ENCODE measurements at regions of chr6 and their contacts with region 1.

Region 1: DNA sequence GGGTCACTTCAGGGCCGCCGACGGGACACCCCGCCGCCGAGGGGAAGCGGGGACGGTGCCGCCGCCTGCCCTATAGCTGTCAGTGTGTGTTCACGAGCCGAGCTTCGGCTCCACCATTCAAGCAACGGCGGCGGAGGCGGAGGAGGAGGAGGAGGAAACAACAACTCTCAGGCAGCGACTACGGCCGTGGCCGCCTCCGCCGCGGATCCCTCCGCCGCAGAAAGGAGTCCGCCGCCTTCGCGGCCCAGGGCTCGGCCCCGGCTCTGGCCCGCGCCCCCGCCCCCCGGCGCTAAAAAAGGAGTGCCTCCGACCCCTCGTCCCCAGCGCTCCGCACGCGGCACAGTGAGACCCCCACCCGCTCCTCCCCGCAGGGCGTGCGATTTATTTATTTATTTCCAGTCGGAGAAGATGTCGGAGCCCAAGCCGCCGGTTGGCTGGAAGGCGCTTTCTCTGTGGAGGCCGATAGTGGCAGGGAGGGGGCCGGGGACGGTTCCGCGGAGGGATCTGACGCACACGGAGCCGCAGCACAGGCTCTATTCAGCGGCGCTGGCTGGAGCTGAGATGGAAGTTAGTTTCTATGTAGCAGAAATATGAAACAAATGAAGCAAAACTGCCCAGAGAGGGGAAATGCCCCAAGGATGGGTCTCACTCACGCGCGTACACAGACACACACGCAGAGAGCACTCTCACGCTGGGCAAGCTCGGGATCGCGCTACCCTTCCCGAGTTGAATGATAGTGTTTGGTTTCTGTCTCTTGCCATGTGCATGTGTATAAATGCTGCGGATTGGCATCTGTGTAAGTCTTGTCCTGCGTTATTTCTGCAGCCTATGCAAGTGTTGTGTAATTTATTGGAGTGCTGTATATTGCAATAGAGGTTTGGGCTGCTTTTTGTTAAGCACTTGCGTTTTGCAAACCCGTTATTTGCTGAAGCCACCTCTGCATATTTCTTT is at the start of gene PHIP:
- DNase-seq: peak; percentile 85 to 97 (median 91)
- ATAC-seq: peak; percentile 82
- H3K4me3 ChIP-seq: peak within 1 kb of the TSS; percentile 80
- H3K4me3 Mint-ChIP-seq: peak within 1 kb of the TSS; percentile 95
- H3K27ac ChIP-seq: peak within 1 kb of the TSS; percentile 93 to 98
- H3K27ac Mint-ChIP-seq: peak within 1 kb of the TSS; percentile 98
- H3K4me1 ChIP-seq: peaks cover 2% of the 10 kb centered on the region
- H3K4me1 Mint-ChIP-seq: peaks cover 53% of the 10 kb centered on the region
- H3K27me3 ChIP-seq: peaks cover 0 to 5% of the 10 kb centered on the region in 2 experiments
- H3K27me3 Mint-ChIP-seq: peaks cover 8% of the 10 kb centered on the region
- CTCF ChIP-seq: no peak
- total RNA-seq, gene PHIP: 35.7 to 36.9 TPM

Region 2: DNA sequence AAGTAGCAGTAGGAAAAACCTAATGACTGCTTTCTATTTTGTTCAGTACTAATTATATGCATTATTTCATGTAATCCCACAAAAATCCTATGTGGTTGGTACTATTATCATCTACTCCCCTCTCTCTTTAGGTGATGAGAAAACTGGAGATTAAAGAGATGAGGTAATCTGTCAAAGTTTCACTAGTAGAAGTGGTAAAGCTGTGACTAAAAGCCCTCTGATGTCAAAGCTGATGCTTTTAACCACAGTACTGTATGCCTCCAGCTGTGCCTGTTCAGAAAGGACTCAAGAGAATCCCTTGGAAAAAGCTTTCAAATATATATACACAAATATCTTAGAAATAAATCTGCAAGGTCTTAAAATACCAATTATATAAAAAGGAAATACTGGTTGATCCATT is 38.3 kb before region 1 on chr6:
- CTCF ChIA-PET with region 1: no interaction called
- POLR2A ChIA-PET with region 1: interaction called, 15 read pairs
- intact Hi-C with region 1: loop called (anchors 5 kb)
- DNase-seq: peak in 1 of 14 experiments; percentile 4
- ATAC-seq: peak; percentile 26
- H3K4me3 ChIP-seq: no peak overlapping the region
- H3K4me3 Mint-ChIP-seq: no peak overlapping the region
- H3K27ac ChIP-seq: no peak overlapping the region
- H3K27ac Mint-ChIP-seq: no peak overlapping the region
- H3K4me1 ChIP-seq: no peaks in the 10 kb centered on the region
- H3K4me1 Mint-ChIP-seq: peaks cover 71% of the 10 kb centered on the region
- H3K27me3 ChIP-seq: no peaks in the 10 kb centered on the region
- H3K27me3 Mint-ChIP-seq: no peaks in the 10 kb centered on the region
- CTCF ChIP-seq: no peak

Region 3: GRCh38 chr6:79056226-79056625 is 22.1 kb before region 1 on chr6:
- CTCF ChIA-PET with region 1: interaction called, 3 read pairs
- POLR2A ChIA-PET with region 1: interaction called, 25 read pairs
- intact Hi-C with region 1: no loop called
- DNase-seq: no peak
- ATAC-seq: no peak
- H3K4me3 ChIP-seq: no peak overlapping the region
- H3K4me3 Mint-ChIP-seq: no peak overlapping the region
- H3K27ac ChIP-seq: no peak overlapping the region
- H3K27ac Mint-ChIP-seq: peak overlapping the region; percentile 37
- H3K4me1 ChIP-seq: no peaks in the 10 kb centered on the region
- H3K4me1 Mint-ChIP-seq: peaks cover 31% of the 10 kb centered on the region
- H3K27me3 ChIP-seq: no peaks in the 10 kb centered on the region
- H3K27me3 Mint-ChIP-seq: no peaks in the 10 kb centered on the region
- CTCF ChIP-seq: no peak

Region 4: GRCh38 chr6:79233611-79234149 is 155.3 kb after region 1 on chr6:
- CTCF ChIA-PET with region 1: interaction called, 3 read pairs
- POLR2A ChIA-PET with region 1: interaction called, 28 read pairs
- intact Hi-C with region 1: loop called (anchors 2 kb)
- DNase-seq: peak; percentile 19 to 78 (median 46)
- ATAC-seq: peak; percentile 28
- H3K4me3 ChIP-seq: peak overlapping the region; percentile 77
- H3K4me3 Mint-ChIP-seq: peak overlapping the region; percentile 99
- H3K27ac ChIP-seq: peak overlapping the region in 1 of 2 donors; percentile 14
- H3K27ac Mint-ChIP-seq: peak overlapping the region; percentile 86
- H3K4me1 ChIP-seq: peaks cover 4% of the 10 kb centered on the region
- H3K4me1 Mint-ChIP-seq: peaks cover 32% of the 10 kb centered on the region
- H3K27me3 ChIP-seq: no peaks in the 10 kb centered on the region
- H3K27me3 Mint-ChIP-seq: no peaks in the 10 kb centered on the region
- CTCF ChIP-seq: peak; percentile 19

Region 5: GRCh38 chr6:79665725-79666551 is 587.6 kb after region 1 on chr6:
- CTCF ChIA-PET with region 1: no interaction called
- POLR2A ChIA-PET with region 1: interaction called, 10 read pairs
- intact Hi-C with region 1: no loop called
- DNase-seq: no peak
- ATAC-seq: peak; percentile 26
- H3K4me3 ChIP-seq: no peak overlapping the region
- H3K4me3 Mint-ChIP-seq: no peak overlapping the region
- H3K27ac ChIP-seq: peak overlapping the region in 1 of 2 donors; percentile 11
- H3K27ac Mint-ChIP-seq: peak overlapping the region; percentile 71
- H3K4me1 ChIP-seq: peaks cover 23% of the 10 kb centered on the region
- H3K4me1 Mint-ChIP-seq: peaks cover 69% of the 10 kb centered on the region
- H3K27me3 ChIP-seq: no peaks in the 10 kb centered on the region
- H3K27me3 Mint-ChIP-seq: peaks cover 11% of the 10 kb centered on the region
- CTCF ChIP-seq: no peak